ENCODE measurements at regions of chr20 and their contacts with region 1.

Region 1: DNA sequence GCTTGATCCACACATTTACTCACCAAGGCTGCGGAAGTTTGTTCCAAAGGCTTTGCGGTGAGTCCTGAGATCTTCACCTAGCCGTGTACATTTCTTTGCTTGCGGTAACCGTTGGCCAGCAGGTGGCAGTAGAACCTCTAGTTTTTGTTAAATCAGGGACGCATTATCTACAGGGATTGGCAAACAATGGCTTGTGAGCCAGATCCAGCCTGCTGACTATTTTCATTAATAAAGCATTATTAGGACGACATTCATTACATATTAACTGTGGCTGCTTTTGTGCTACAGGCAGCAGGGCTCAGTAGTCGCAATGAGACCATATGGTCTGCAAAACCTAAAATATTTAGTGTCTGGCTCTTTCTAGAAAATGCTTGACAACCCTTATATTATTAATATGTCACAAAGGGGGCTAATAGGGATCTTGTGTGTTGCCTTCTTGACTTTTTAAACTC is 174.1 kb downstream of the DOK5 start:
- DNase-seq: peak; percentile 84
- H3K4me3 ChIP-seq: no peak overlapping the region
- H3K27ac ChIP-seq: no peak overlapping the region
- H3K4me1 ChIP-seq: no peaks in the 10 kb centered on the region
- H3K27me3 ChIP-seq: no peaks in the 10 kb centered on the region
- CTCF ChIP-seq: peak; percentile 86

Region 2: DNA sequence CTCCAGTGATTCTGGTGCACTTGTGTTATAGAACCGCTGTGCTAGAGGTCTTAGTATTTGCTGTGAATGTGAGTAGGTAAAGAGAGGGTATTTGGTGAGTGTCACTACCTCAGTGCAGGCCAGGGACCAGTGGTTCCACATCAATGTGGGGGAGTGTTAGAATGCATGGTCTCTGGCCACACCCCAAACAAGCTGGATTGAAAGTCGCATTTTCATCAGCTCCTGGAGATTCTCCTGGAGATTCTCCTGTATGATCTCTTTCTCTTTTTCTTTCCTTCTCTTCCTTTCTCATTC is 552.4 kb before region 1 on chr20:
- CTCF ChIA-PET with region 1: no interaction called
- POLR2A ChIA-PET with region 1: no interaction called
- intact Hi-C with region 1: loop called (anchors 2 kb)
- DNase-seq: no peak
- H3K4me3 ChIP-seq: no peak overlapping the region
- H3K27ac ChIP-seq: no peak overlapping the region
- H3K4me1 ChIP-seq: peaks cover 25% of the 10 kb centered on the region
- H3K27me3 ChIP-seq: no peaks in the 10 kb centered on the region
- CTCF ChIP-seq: no peak

Region 3: GRCh38 chr20:54219751-54220426 is 429.6 kb before region 1 on chr20:
- CTCF ChIA-PET with region 1: no interaction called
- POLR2A ChIA-PET with region 1: no interaction called
- intact Hi-C with region 1: loop called (anchors 1 kb)
- DNase-seq: peak; percentile 62
- H3K4me3 ChIP-seq: no peak overlapping the region
- H3K27ac ChIP-seq: no peak overlapping the region
- H3K4me1 ChIP-seq: no peaks in the 10 kb centered on the region
- H3K27me3 ChIP-seq: no peaks in the 10 kb centered on the region
- CTCF ChIP-seq: peak; percentile 70

Region 4: GRCh38 chr20:54456971-54457370 is 192.6 kb before region 1 on chr20:
- CTCF ChIA-PET with region 1: no interaction called
- POLR2A ChIA-PET with region 1: no interaction called
- intact Hi-C with region 1: loop called (anchors 5 kb)
- DNase-seq: no peak
- H3K4me3 ChIP-seq: no peak overlapping the region
- H3K27ac ChIP-seq: no peak overlapping the region
- H3K4me1 ChIP-seq: no peaks in the 10 kb centered on the region
- H3K27me3 ChIP-seq: no peaks in the 10 kb centered on the region
- CTCF ChIP-seq: peak; percentile 43; the same call in 1 of the 2 replicates